Body of pancreas (tissue), 4 donors: ENCODE measurements at regions of chr10 and their contacts with region 1.

Region 1: GRCh38 chr10:32386623-32387260 is 39.8 kb upstream of the EPC1 start:
- DNase-seq: no peak
- ATAC-seq: no peak
- H3K4me3 ChIP-seq: no peak overlapping the region
- H3K27ac ChIP-seq: no peak overlapping the region
- H3K4me1 ChIP-seq: peaks cover 4% of the 10 kb centered on the region
- H3K27me3 ChIP-seq: no peaks in the 10 kb centered on the region
- CTCF ChIP-seq: no peak
- POLR2A ChIP-seq: no peak

Region 2: DNA sequence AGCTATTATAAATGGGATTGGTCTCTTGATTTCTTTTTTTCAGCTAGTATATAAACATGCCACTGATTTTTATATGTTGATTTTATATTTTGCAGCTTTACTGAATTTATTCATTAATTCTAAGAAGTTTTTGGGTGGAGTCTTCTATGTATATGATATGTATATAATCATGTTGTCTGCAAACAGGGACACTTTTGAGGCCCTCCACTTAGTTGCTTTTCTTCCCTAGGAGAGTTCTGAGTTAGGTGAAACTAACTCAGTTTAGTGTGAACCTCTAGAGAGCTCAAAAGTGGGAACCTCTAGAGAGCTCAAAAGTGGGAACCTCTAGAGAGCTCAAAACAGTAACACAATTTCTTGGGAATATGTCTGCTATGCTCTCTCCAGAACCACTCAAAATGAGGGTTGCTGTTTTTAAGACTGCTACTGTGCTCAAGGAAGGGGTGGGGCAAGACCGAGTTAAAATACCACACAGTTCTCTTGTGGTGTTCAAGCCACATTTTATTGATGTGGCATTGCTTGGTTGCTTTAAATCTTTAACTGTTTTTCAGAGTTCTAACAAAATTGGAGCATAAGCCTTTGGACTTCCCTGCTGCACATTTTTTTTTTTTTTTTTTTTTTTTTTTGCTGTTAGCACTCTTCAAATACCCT is 72.4 kb after region 1 on chr10:
- intact Hi-C with region 1: loop called (anchors 10 kb)
- DNase-seq: no peak
- ATAC-seq: no peak
- H3K4me3 ChIP-seq: no peak overlapping the region
- H3K27ac ChIP-seq: no peak overlapping the region
- H3K4me1 ChIP-seq: no peaks in the 10 kb centered on the region
- H3K27me3 ChIP-seq: no peaks in the 10 kb centered on the region
- CTCF ChIP-seq: no peak
- POLR2A ChIP-seq: no peak

Region 3: GRCh38 chr10:32538256-32538655 is 151.5 kb after region 1 on chr10:
- intact Hi-C with region 1: no loop called
- DNase-seq: no peak
- ATAC-seq: no peak
- H3K4me3 ChIP-seq: no peak overlapping the region
- H3K27ac ChIP-seq: no peak overlapping the region
- H3K4me1 ChIP-seq: no peaks in the 10 kb centered on the region
- H3K27me3 ChIP-seq: no peaks in the 10 kb centered on the region
- CTCF ChIP-seq: no peak
- POLR2A ChIP-seq: no peak